Activated CD8-positive, alpha-beta T cell treated with anti-CD3 and anti-CD28 coated beads, Interleukin-2, amount 10 ng/mL, durations not matched to agents 7 days and 5 days (primary cell): ENCODE measurements at regions of chr12 and their contacts with region 1.

Region 1: DNA sequence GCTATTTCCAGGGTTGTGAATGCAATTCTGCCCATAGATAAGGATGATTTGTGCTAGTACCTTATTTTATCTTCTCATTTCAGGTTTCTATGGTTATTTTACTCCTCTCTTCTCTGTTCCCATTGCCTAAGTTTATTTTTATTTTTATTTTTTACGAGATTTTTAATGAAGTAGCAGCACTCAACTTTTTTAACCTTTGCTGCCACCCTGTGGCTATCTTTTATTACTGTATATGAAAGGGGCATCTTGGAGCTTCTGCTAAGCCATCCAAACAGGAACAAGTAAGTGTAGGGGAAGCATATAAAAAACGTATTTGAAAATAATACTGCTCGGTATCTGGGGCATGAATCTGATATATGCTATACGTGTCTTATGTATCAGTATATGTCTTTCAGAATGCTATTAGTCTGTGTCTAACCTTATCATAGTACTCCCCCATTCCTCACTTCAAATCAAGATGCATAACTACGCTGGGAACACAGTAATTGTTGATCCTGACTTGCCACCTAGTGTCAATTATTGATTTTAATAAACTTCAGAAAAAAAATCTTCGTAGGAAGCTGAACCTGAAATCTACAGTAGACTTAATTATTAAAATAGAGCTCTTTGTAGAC is 60.3 kb downstream of the KLRG1 start:
- DNase-seq: peak; percentile 56
- ATAC-seq: peak; percentile 72
- H3K4me3 Mint-ChIP-seq: no peak overlapping the region
- H3K27ac Mint-ChIP-seq: no peak overlapping the region
- H3K4me1 Mint-ChIP-seq: peaks cover 14% of the 10 kb centered on the region
- H3K27me3 Mint-ChIP-seq: no peaks in the 10 kb centered on the region

Region 2: GRCh38 chr12:8644345-8645248 is 405.0 kb before region 1 on chr12:
- CTCF ChIA-PET with region 1: interaction called, 12 read pairs
- POLR2A ChIA-PET with region 1: no interaction called
- DNase-seq: peak; percentile 81
- ATAC-seq: peak; percentile 89
- H3K4me3 Mint-ChIP-seq: peak overlapping the region; percentile 60
- H3K27ac Mint-ChIP-seq: peak overlapping the region; percentile 91
- H3K4me1 Mint-ChIP-seq: peaks cover 55% of the 10 kb centered on the region
- H3K27me3 Mint-ChIP-seq: peaks cover 6% of the 10 kb centered on the region

Region 3: GRCh38 chr12:8681041-8681902 is 368.4 kb before region 1 on chr12:
- CTCF ChIA-PET with region 1: interaction called, 19 read pairs
- POLR2A ChIA-PET with region 1: no interaction called
- DNase-seq: no peak
- ATAC-seq: no peak
- H3K4me3 Mint-ChIP-seq: no peak overlapping the region
- H3K27ac Mint-ChIP-seq: no peak overlapping the region
- H3K4me1 Mint-ChIP-seq: no peaks in the 10 kb centered on the region
- H3K27me3 Mint-ChIP-seq: peaks cover 6% of the 10 kb centered on the region

Region 4: GRCh38 chr12:8860165-8860961 is 189.3 kb before region 1 on chr12:
- CTCF ChIA-PET with region 1: interaction called, 10 read pairs
- POLR2A ChIA-PET with region 1: no interaction called
- DNase-seq: peak; percentile 43
- ATAC-seq: no peak
- H3K4me3 Mint-ChIP-seq: no peak overlapping the region
- H3K27ac Mint-ChIP-seq: no peak overlapping the region
- H3K4me1 Mint-ChIP-seq: no peaks in the 10 kb centered on the region
- H3K27me3 Mint-ChIP-seq: no peaks in the 10 kb centered on the region

Region 5: GRCh38 chr12:8914716-8915526 is 134.7 kb before region 1 on chr12:
- CTCF ChIA-PET with region 1: interaction called, 15 read pairs
- POLR2A ChIA-PET with region 1: no interaction called
- DNase-seq: peak; percentile 74
- ATAC-seq: peak; percentile 94
- H3K4me3 Mint-ChIP-seq: no peak overlapping the region
- H3K27ac Mint-ChIP-seq: no peak overlapping the region
- H3K4me1 Mint-ChIP-seq: peaks cover 8% of the 10 kb centered on the region
- H3K27me3 Mint-ChIP-seq: peaks cover 15% of the 10 kb centered on the region

Region 6: GRCh38 chr12:8949342-8950220 is 100.0 kb before region 1 on chr12 and contains the start of gene M6PR:
- CTCF ChIA-PET with region 1: interaction called, 153 read pairs
- POLR2A ChIA-PET with region 1: interaction called, 10 read pairs
- DNase-seq: peak; percentile 96
- ATAC-seq: peak; percentile 85
- H3K4me3 Mint-ChIP-seq: peak within 1 kb of the TSS; percentile 95
- H3K27ac Mint-ChIP-seq: peak within 1 kb of the TSS; percentile 96
- H3K4me1 Mint-ChIP-seq: peaks cover 53% of the 10 kb centered on the region
- H3K27me3 Mint-ChIP-seq: no peaks in the 10 kb centered on the region
- total RNA-seq, gene M6PR: 170 to 201 TPM

Region 7: GRCh38 chr12:9039397-9039977 is 10.1 kb before region 1 on chr12:
- CTCF ChIA-PET with region 1: interaction called, 58 read pairs
- POLR2A ChIA-PET with region 1: no interaction called
- DNase-seq: peak; percentile 43
- ATAC-seq: no peak
- H3K4me3 Mint-ChIP-seq: no peak overlapping the region
- H3K27ac Mint-ChIP-seq: no peak overlapping the region
- H3K4me1 Mint-ChIP-seq: peaks cover 23% of the 10 kb centered on the region
- H3K27me3 Mint-ChIP-seq: peaks cover 3% of the 10 kb centered on the region